Psoas muscle (tissue), 8 donors: ENCODE measurements at regions of chr9 and their contacts with region 1.

Region 1: GRCh38 chr9:112793213-112793810 is 42.8 kb downstream of the SNX30 start:
- DNase-seq: peak; percentile 66 to 85
- ATAC-seq: peak; percentile 85 to 97 (median 94)
- H3K4me3 ChIP-seq: no peak overlapping the region
- H3K27ac ChIP-seq: no peak overlapping the region
- H3K4me1 ChIP-seq: peaks cover 18% of the 10 kb centered on the region
- H3K27me3 ChIP-seq: no peaks in the 10 kb centered on the region
- CTCF ChIP-seq: peak; percentile 69

Region 2: GRCh38 chr9:112731971-112732370 is 61.3 kb before region 1 on chr9:
- intact Hi-C with region 1: no loop called
- DNase-seq: no peak
- ATAC-seq: no peak
- H3K4me3 ChIP-seq: no peak overlapping the region
- H3K27ac ChIP-seq: no peak overlapping the region
- H3K4me1 ChIP-seq: no peaks in the 10 kb centered on the region
- H3K27me3 ChIP-seq: no peaks in the 10 kb centered on the region
- CTCF ChIP-seq: no peak

Region 3: GRCh38 chr9:112750111-112750767 is 43.1 kb before region 1 on chr9 and contains the start of gene SNX30:
- intact Hi-C with region 1: loop called in 1 of 2 experiments (anchors 5 kb)
- DNase-seq: peak; percentile 91 to 95
- ATAC-seq: peak; percentile 96 to 97 (median 96)
- H3K4me3 ChIP-seq: peak within 1 kb of the TSS; percentile 98
- H3K27ac ChIP-seq: peak within 1 kb of the TSS; percentile 89
- H3K4me1 ChIP-seq: peaks cover 36% of the 10 kb centered on the region
- H3K27me3 ChIP-seq: no peaks in the 10 kb centered on the region
- CTCF ChIP-seq: peak; percentile 11
- total RNA-seq, gene SNX30: 1.6 to 2.8 (median 2.3) TPM

Region 4: DNA sequence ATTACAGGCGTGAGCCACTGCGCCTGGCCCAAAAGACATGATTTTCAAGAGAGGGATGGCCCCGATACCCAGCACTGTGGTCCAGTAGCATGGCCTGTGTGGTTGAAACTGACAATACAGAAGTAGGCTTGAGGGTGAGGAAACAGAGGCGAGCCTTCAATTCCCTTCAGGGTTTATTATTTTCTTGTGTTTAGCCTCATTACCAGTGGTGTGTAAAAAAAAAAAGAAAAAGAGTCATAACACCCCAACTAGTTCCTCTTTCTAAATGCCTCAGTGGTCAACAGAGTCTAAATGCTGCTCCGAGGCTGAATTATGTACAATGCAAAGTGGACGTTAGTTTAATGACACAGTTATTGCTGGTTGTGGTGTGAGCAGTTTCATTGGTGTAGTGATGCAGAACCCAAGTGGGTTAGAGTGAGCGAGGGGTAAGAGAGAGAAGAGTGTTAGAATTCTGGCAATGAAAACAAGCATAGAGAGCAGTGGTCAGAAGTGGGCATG is 16.1 kb after region 1 on chr9:
- intact Hi-C with region 1: no loop called
- DNase-seq: no peak
- ATAC-seq: no peak
- H3K4me3 ChIP-seq: no peak overlapping the region
- H3K27ac ChIP-seq: no peak overlapping the region
- H3K4me1 ChIP-seq: no peaks in the 10 kb centered on the region
- H3K27me3 ChIP-seq: no peaks in the 10 kb centered on the region
- CTCF ChIP-seq: no peak